Psoas muscle (tissue), 8 donors: ENCODE measurements at regions of chr4 and their contacts with region 1.

Region 1: DNA sequence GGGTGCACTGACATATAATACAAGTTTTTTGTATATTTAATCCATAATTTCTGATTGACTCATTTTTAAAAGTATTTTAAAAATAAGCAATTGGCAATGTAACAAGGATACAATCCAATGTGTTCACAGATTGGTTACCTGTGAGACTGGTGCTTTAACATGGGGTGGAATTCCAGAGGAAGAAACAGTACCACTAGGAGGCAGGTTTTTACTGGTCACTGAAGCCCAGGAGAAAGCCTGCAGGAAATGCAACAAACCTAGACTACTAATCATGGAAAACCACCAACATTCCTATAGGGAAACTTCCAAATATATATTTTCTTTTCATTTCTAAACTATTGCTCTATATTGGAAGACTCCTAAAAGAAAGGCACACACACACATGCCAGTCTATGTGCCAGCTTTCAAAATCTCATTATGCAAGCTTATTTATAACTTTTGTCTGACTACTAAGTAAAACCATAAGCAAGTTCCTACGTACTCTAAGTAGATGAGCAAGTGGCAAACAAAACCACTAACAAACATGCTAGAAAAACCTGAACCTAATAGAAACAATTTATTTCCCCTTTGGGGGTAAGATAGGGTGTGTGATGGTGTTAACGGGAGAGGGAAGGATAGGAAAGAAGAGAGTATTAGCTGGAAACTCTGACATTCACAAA is 19.2 kb downstream of the G3BP2 start:
- DNase-seq: no peak
- ATAC-seq: peak; percentile 48 to 77 (median 66)
- H3K4me3 ChIP-seq: no peak overlapping the region
- H3K27ac ChIP-seq: no peak overlapping the region
- H3K4me1 ChIP-seq: no peaks in the 10 kb centered on the region
- H3K27me3 ChIP-seq: no peaks in the 10 kb centered on the region
- CTCF ChIP-seq: peak; percentile 49

Region 2: GRCh38 chr4:75630174-75630936 is 23.6 kb before region 1 on chr4 and contains the start of gene CDKL2:
- intact Hi-C with region 1: no loop called
- DNase-seq: peak; percentile 79 to 85
- ATAC-seq: peak; percentile 84 to 97 (median 92)
- H3K4me3 ChIP-seq: peak within 1 kb of the TSS; percentile 77
- H3K27ac ChIP-seq: no peak within 1 kb of the TSS
- H3K4me1 ChIP-seq: peaks cover 3% of the 10 kb centered on the region
- H3K27me3 ChIP-seq: no peaks in the 10 kb centered on the region
- CTCF ChIP-seq: no peak
- total RNA-seq, gene CDKL2: 0.30 TPM in 1 of 4 donors, not detected in the others

Region 3: DNA sequence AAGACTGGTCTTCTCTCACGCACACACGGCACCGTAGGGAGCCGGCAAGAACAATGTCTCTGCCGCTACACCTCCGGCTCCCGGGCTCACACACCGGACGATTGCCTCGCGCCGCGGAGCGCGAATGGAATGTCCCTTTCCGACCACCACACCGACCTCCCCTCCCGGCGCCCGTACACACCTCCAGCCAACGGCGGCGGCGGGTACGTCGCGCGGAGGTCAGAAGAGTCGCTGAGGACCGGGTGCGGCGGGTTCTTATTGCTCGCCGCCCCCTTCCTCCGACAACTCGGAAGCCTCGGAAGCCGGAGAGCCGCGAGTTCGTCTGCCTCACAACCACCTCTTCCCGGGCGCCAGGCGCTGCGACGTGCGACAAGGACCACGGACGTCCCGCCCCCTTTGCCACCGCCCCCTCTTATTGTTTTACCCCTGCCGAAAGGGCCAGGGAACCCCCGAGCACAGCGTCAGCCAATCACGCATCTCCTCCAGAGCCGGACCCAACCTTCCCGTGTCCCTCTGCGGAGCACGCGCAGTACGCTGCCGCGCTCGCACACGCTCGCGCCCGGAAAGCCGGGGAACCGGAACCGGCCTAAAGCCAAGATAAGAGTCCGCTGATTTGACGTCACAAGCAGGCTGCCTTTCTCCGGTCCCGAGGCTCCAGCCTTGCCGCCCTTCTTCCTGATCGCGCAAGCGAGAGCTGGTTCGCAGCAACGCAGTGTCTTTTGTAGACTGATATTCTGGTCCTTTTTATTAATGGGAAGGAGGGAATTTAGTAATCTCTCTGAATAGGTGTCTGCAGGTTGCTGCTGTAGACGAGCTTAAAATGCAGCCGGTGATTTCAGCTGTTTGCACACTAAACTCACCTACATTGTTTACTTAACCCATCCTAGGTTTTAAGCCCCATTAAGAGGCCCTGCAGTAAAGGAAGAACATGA is 19.3 kb after region 1 on chr4 and contains the start of gene G3BP2:
- intact Hi-C with region 1: loop called in 1 of 2 experiments (anchors 2 kb)
- DNase-seq: peak; percentile 99
- ATAC-seq: peak; percentile 96 to 98 (median 98)
- H3K4me3 ChIP-seq: peak within 1 kb of the TSS; percentile 97
- H3K27ac ChIP-seq: peak within 1 kb of the TSS; percentile 99
- H3K4me1 ChIP-seq: peaks cover 42% of the 10 kb centered on the region
- H3K27me3 ChIP-seq: no peaks in the 10 kb centered on the region
- CTCF ChIP-seq: no peak
- total RNA-seq, gene G3BP2: 126 to 219 (median 156) TPM

Region 4: DNA sequence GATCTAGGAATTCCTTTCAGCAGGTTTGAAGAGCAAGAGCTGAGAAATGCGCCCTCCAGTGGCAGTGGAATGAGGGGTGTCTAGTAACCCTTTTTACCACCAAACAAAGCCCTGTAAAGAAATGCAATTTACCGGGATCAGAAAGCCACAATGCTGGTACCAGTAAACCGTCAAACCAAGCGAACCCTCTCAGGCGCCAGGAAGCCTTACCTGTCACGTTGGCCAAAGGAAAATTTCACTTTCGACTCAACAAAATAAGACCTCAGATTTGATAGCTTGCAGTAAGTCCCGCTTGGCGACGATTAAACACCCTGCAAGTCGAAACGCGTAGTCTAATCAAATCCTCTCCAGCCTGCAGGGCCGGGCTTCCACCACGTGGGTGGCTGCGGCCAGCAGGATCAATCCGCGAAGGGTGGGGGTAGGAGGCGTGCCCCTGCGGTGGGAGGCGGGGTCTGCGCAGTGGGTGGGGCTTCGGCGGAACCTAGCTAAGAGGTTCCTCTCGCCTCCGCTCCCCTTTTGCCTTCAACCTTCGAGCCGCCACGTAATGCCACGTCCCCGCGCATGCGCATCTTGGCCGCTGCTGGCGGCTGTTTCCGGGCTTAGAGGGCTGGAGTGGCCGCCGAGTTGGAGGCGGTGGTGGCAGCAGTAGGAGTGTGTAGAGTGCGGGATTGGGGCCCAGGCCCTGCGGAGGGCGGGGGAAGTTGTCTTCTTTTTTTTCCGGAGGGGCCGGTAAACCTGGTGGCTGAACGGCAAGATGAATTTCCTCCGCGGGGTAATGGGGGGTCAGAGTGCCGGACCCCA is 70.3 kb after region 1 on chr4 and contains the start of gene USO1:
- intact Hi-C with region 1: loop called in 1 of 2 experiments (anchors 5 kb)
- DNase-seq: peak; percentile 98 to 99
- ATAC-seq: peak; percentile 83 to 93 (median 90)
- H3K4me3 ChIP-seq: peak within 1 kb of the TSS; percentile 92
- H3K27ac ChIP-seq: peak within 1 kb of the TSS; percentile 99
- H3K4me1 ChIP-seq: peaks cover 39% of the 10 kb centered on the region
- H3K27me3 ChIP-seq: no peaks in the 10 kb centered on the region
- CTCF ChIP-seq: peak; percentile 70
- total RNA-seq, gene USO1: 175 to 210 (median 180) TPM

Region 5: DNA sequence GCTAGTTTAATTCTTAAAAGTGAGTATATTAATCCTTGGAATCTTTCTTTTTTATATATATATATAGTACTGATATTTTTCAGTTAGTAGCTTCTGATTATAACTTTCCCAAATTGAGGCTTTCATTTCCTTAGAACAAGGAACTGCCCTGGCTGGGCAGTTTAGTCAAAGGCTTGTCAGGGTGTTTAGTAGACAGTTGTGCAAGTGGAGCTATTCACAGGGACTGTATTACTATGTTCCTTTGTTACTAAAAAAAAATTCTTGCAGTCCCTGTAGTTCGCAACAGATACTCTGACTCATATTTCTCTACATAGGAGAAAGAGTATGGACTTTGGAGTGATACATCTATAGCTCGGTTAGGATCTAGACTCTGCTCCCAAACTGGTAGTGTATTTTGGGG is 91.2 kb after region 1 on chr4:
- intact Hi-C with region 1: no loop called
- DNase-seq: no peak
- ATAC-seq: peak; percentile 90 to 96 (median 94)
- H3K4me3 ChIP-seq: peak overlapping the region; percentile 12
- H3K27ac ChIP-seq: peak overlapping the region; percentile 78
- H3K4me1 ChIP-seq: peaks cover 50% of the 10 kb centered on the region
- H3K27me3 ChIP-seq: no peaks in the 10 kb centered on the region
- CTCF ChIP-seq: no peak

Region 6: DNA sequence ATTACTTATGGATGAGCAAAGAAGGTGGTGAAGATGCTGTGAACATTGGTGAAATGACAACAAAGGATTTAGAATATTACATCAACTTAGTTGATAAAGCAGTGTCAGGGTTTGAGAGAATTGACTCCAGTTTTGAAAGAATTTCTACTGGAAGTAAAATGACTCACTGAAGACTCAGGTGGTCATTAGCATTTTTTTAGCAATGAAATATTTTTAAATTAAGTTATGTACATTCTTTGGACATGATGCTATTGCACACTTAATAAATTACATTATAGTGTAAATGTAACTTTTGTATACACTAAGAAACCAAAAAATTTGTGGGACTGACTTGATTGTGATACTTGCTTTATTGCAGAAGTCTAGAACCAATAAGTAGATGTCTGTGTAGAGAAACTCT is 127.3 kb after region 1 on chr4:
- intact Hi-C with region 1: loop called (anchors 5 to 10 kb)
- DNase-seq: no peak
- ATAC-seq: no peak
- H3K4me3 ChIP-seq: no peak overlapping the region
- H3K27ac ChIP-seq: no peak overlapping the region
- H3K4me1 ChIP-seq: no peaks in the 10 kb centered on the region
- H3K27me3 ChIP-seq: no peaks in the 10 kb centered on the region
- CTCF ChIP-seq: no peak

Region 7: GRCh38 chr4:75786526-75786925 is 132.6 kb after region 1 on chr4:
- intact Hi-C with region 1: loop called (anchors 5 to 10 kb)
- DNase-seq: no peak
- ATAC-seq: no peak
- H3K4me3 ChIP-seq: no peak overlapping the region
- H3K27ac ChIP-seq: no peak overlapping the region
- H3K4me1 ChIP-seq: no peaks in the 10 kb centered on the region
- H3K27me3 ChIP-seq: no peaks in the 10 kb centered on the region
- CTCF ChIP-seq: no peak

Region 8: DNA sequence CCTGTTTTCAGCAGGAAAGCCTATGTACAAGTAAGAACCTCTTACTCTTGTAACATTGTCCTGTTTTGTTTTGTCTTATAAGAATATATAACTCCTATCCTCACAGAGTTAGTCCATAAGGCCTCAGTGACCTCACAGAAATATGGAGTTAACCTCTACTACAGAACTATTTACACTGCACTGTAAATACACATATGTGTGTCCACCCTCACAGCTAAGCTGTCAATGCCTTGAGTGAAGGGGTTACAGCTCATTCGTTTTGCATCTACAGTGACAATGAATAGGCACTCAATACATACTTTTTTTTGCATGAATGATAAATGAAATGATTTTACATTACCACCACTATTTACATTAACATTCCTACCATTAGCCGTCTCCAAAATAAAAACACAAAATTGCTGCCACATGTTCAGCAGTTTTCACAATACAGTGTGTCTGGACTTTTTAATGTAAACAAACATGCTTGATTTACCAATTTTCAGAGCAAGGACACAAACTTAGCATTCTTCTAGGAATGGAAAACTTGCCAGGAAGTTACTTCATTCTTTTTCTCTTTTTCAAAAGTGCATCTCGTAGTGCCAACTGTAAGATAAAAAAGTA is 296.3 kb after region 1 on chr4:
- intact Hi-C with region 1: loop called (anchors 5 to 10 kb)
- DNase-seq: no peak
- ATAC-seq: no peak
- H3K4me3 ChIP-seq: no peak overlapping the region
- H3K27ac ChIP-seq: no peak overlapping the region
- H3K4me1 ChIP-seq: no peaks in the 10 kb centered on the region
- H3K27me3 ChIP-seq: no peaks in the 10 kb centered on the region
- CTCF ChIP-seq: no peak